ENCODE measurements at regions of chr19 and their contacts with region 1.

Region 1: GRCh38 chr19:44800461-44800860 is 8.4 kb upstream of the BCAM start:
- DNase-seq: peak; percentile 84
- H3K4me3 Mint-ChIP-seq: no peak overlapping the region
- H3K27ac Mint-ChIP-seq: no peak overlapping the region
- H3K4me1 Mint-ChIP-seq: no peaks in the 10 kb centered on the region
- H3K27me3 Mint-ChIP-seq: no peaks in the 10 kb centered on the region
- CTCF ChIP-seq: peak; percentile 95

Region 2: GRCh38 chr19:44712864-44713515 is 87.5 kb before region 1 on chr19:
- CTCF ChIA-PET with region 1: no interaction called
- POLR2A ChIA-PET with region 1: no interaction called
- intact Hi-C with region 1: no loop called
- DNase-seq: no peak
- H3K4me3 Mint-ChIP-seq: no peak overlapping the region
- H3K27ac Mint-ChIP-seq: no peak overlapping the region
- H3K4me1 Mint-ChIP-seq: no peaks in the 10 kb centered on the region
- H3K27me3 Mint-ChIP-seq: no peaks in the 10 kb centered on the region
- CTCF ChIP-seq: no peak

Region 3: GRCh38 chr19:44782729-44783128 is 17.7 kb before region 1 on chr19:
- CTCF ChIA-PET with region 1: interaction called, 27 read pairs
- POLR2A ChIA-PET with region 1: no interaction called
- intact Hi-C with region 1: no loop called
- DNase-seq: no peak
- H3K4me3 Mint-ChIP-seq: no peak overlapping the region
- H3K27ac Mint-ChIP-seq: no peak overlapping the region
- H3K4me1 Mint-ChIP-seq: no peaks in the 10 kb centered on the region
- H3K27me3 Mint-ChIP-seq: no peaks in the 10 kb centered on the region
- CTCF ChIP-seq: no peak